ENCODE measurements at regions of chr12 and their contacts with region 1.

Region 1: DNA sequence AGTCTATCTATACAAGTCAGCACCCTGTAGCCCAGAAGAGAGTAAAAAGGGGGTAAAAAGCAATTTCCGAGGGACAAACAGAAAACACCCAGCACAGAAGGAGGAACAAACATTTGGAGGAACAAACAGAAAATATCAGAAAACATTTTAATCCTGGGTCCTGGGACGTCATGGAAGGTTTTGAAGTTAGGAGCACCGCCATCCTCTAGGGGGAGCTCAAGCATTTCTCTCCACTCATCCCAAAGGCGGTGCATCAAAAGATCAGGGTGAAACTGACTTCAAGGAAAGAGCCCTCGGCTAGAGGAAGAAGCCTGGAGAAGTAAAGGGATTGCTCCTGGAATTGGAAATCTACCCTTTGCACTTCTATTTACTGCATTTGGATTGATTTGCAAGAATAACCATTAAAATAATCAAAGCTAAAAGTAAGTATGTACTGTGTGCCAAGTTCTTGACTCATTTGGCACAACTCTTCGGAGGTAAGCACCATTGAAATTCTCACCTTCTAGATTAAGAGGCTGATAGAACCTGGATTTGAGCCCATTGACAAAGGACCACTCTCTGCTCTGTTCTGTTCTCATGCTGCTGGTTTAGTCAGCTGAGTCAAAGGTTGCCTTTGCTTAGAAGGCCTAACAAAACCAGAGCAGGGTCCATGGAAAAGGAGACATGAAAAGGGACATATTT is 17.2 kb upstream of the POC1B start:
- DNase-seq: peak; percentile 36 to 86
- ATAC-seq: peak; percentile 81 to 90 (median 90)
- H3K4me3 ChIP-seq: no peak overlapping the region
- H3K4me3 Mint-ChIP-seq: no peak overlapping the region
- H3K27ac ChIP-seq: no peak overlapping the region
- H3K27ac Mint-ChIP-seq: peak overlapping the region in 1 of 2 donors; percentile 0
- H3K4me1 ChIP-seq: no peaks in the 10 kb centered on the region
- H3K4me1 Mint-ChIP-seq: peaks cover 9 to 11% of the 10 kb centered on the region in 2 donors
- H3K27me3 ChIP-seq: no peaks in the 10 kb centered on the region
- H3K27me3 Mint-ChIP-seq: no peaks in the 10 kb centered on the region
- CTCF ChIP-seq: peak; percentile 91

Region 2: GRCh38 chr12:89960011-89960507 is 417.0 kb after region 1 on chr12:
- intact Hi-C with region 1: loop called (anchors 10 kb)
- DNase-seq: peak in 1 of 2 donors; percentile 61
- ATAC-seq: peak; percentile 57 to 77 (median 72)
- H3K4me3 ChIP-seq: no peak overlapping the region
- H3K4me3 Mint-ChIP-seq: no peak overlapping the region
- H3K27ac ChIP-seq: no peak overlapping the region
- H3K27ac Mint-ChIP-seq: no peak overlapping the region
- H3K4me1 ChIP-seq: no peaks in the 10 kb centered on the region
- H3K4me1 Mint-ChIP-seq: peaks cover 5 to 12% of the 10 kb centered on the region in 2 donors
- H3K27me3 ChIP-seq: no peaks in the 10 kb centered on the region
- H3K27me3 Mint-ChIP-seq: peaks cover 0 to 37% of the 10 kb centered on the region in 2 donors
- CTCF ChIP-seq: no peak

Region 3: DNA sequence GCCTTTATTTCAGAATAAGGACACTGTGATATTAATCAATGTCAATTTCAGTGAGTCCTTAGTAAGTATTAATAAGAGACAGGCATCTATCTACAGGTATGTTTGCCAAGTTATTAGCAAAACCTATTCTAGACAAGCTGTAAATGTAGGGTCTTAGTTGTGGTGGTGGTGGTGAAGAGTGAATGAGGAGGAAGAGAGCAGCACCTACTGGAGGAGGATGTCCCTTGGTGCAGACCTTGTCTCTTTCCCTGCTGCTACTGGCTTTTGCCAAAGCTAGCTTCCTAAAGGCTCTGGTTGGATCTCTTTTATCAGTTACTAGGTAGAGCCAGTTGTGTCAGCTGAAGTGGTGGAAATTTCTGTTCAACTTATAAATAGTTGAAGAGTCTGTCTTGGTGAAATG is 470.4 kb after region 1 on chr12:
- intact Hi-C with region 1: loop called (anchors 5 kb)
- DNase-seq: peak in 1 of 2 donors; percentile 57
- ATAC-seq: peak in 1 of 3 donors; percentile 40
- H3K4me3 ChIP-seq: no peak overlapping the region
- H3K4me3 Mint-ChIP-seq: no peak overlapping the region
- H3K27ac ChIP-seq: no peak overlapping the region
- H3K27ac Mint-ChIP-seq: no peak overlapping the region
- H3K4me1 ChIP-seq: no peaks in the 10 kb centered on the region
- H3K4me1 Mint-ChIP-seq: no peaks in the 10 kb centered on the region
- H3K27me3 ChIP-seq: no peaks in the 10 kb centered on the region
- H3K27me3 Mint-ChIP-seq: peaks cover 0 to 4% of the 10 kb centered on the region in 2 donors
- CTCF ChIP-seq: no peak

Region 4: GRCh38 chr12:90102957-90103652 is 560.1 kb after region 1 on chr12:
- intact Hi-C with region 1: loop called (anchors 1 kb)
- DNase-seq: peak in 1 of 2 donors; percentile 68
- ATAC-seq: peak; percentile 52 to 83 (median 61)
- H3K4me3 ChIP-seq: no peak overlapping the region
- H3K4me3 Mint-ChIP-seq: peak overlapping the region; percentile 21
- H3K27ac ChIP-seq: no peak overlapping the region
- H3K27ac Mint-ChIP-seq: no peak overlapping the region
- H3K4me1 ChIP-seq: no peaks in the 10 kb centered on the region
- H3K4me1 Mint-ChIP-seq: peaks cover 0 to 4% of the 10 kb centered on the region in 2 donors
- H3K27me3 ChIP-seq: no peaks in the 10 kb centered on the region
- H3K27me3 Mint-ChIP-seq: peaks cover 10 to 14% of the 10 kb centered on the region in 2 donors
- CTCF ChIP-seq: peak; percentile 73

Region 5: GRCh38 chr12:90163975-90164374 is 620.9 kb after region 1 on chr12:
- intact Hi-C with region 1: loop called (anchors 1 kb)
- DNase-seq: peak in 1 of 2 donors; percentile 14
- ATAC-seq: no peak
- H3K4me3 ChIP-seq: no peak overlapping the region
- H3K4me3 Mint-ChIP-seq: no peak overlapping the region
- H3K27ac ChIP-seq: no peak overlapping the region
- H3K27ac Mint-ChIP-seq: no peak overlapping the region
- H3K4me1 ChIP-seq: no peaks in the 10 kb centered on the region
- H3K4me1 Mint-ChIP-seq: no peaks in the 10 kb centered on the region
- H3K27me3 ChIP-seq: no peaks in the 10 kb centered on the region
- H3K27me3 Mint-ChIP-seq: peaks cover 3 to 6% of the 10 kb centered on the region in 2 donors
- CTCF ChIP-seq: no peak

Region 6: DNA sequence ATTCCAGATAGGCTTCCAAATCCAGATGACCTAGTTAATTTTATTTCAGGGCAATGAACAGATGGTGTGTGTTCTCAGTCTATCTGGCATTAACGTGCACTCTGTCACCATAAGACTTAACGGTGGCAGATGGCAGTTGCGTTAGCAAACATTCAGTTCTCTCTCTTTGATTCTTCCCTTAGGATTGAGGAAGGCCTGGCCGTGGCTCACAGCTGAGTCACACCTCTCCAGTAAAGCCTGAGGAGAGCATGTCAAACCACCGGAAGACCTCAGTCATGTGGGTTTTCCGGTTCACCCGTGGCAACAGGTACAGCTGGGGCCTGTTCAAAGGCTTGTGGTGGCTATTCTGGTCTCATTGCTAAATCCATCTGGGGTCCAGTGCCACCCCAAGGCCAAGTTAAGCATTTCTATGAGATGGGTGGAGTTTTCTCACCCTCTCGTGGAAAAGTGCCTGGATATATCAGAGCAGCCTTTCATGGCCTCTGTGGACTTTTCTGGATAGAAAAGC is 710.7 kb after region 1 on chr12:
- intact Hi-C with region 1: loop called (anchors 2 kb)
- DNase-seq: peak; percentile 22 to 57
- ATAC-seq: peak; percentile 82 to 92 (median 82)
- H3K4me3 ChIP-seq: no peak overlapping the region
- H3K4me3 Mint-ChIP-seq: no peak overlapping the region
- H3K27ac ChIP-seq: peak overlapping the region; percentile 4
- H3K27ac Mint-ChIP-seq: no peak overlapping the region
- H3K4me1 ChIP-seq: peaks cover 12% of the 10 kb centered on the region
- H3K4me1 Mint-ChIP-seq: peaks cover 12 to 24% of the 10 kb centered on the region in 2 donors
- H3K27me3 ChIP-seq: no peaks in the 10 kb centered on the region
- H3K27me3 Mint-ChIP-seq: no peaks in the 10 kb centered on the region
- CTCF ChIP-seq: no peak

Region 7: DNA sequence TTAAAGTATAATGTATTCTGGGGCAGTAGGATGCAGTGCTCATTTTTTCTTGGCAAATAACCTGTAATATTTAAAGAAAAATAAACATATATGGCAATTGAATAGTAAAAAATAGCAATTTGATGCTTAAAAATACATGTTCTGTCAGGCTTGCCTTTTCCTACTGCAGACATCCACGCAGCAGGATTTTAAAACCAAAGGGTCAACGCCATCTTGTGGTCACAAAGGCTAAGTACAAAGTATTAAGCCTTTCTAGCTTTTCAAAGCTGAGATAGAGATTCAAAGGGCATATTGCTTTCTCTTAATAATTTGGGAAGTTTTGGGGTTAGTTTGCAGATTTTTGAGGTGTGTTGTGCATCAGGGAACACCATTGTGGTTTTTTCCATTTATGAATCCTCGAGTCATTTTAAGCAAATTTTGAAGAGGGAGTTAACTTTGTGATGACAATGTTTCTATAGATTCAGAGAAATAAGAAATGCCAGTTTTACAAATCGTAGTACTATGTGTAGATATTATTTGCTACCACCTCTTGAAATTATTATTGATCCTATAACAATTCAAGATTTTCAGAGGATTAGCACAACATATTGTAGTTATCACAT is 1416.6 kb after region 1 on chr12:
- intact Hi-C with region 1: loop called (anchors 1 kb)
- DNase-seq: peak in 1 of 2 donors; percentile 60
- ATAC-seq: peak in 2 of 3 donors; percentile 67 to 78
- H3K4me3 ChIP-seq: no peak overlapping the region
- H3K4me3 Mint-ChIP-seq: no peak overlapping the region
- H3K27ac ChIP-seq: no peak overlapping the region
- H3K27ac Mint-ChIP-seq: no peak overlapping the region
- H3K4me1 ChIP-seq: no peaks in the 10 kb centered on the region
- H3K4me1 Mint-ChIP-seq: no peaks in the 10 kb centered on the region
- H3K27me3 ChIP-seq: no peaks in the 10 kb centered on the region
- H3K27me3 Mint-ChIP-seq: no peaks in the 10 kb centered on the region
- CTCF ChIP-seq: peak; percentile 66

Measured in natural killer cell (primary cell).